ENCODE measurements at regions of chr20 and their contacts with region 1.

Region 1: GRCh38 chr20:7516621-7517111 is 423.6 kb downstream of the HAO1 start:
- DNase-seq: no peak

Region 2: DNA sequence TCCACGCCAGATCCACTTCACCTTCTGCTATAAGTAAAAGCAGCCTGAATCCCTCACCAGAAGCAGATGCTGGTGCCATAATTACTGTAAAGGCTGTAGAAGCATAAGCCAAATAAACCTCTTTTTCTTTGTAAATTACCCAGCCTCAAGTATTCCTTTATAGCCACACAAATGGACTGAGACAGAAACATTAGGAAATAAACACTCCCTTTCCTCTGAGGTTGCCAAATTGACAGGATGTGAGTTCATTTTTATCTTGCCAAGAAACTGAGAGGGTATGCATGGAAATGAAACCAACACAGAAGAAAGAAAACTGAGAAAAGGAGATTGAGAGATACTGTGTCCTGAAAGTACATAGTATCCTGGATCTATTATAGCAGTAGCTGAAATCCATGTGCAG is 57.6 kb before region 1 on chr20:
- intact Hi-C with region 1: no loop called
- DNase-seq: no peak

Region 3: GRCh38 chr20:7829776-7830175 is 313.1 kb after region 1 on chr20:
- intact Hi-C with region 1: loop called in 1 of 2 experiments (anchors 5 kb)
- DNase-seq: no peak